SK-N-SH (cell line): ENCODE measurements at regions of chr11 and their contacts with region 1.

Region 1: GRCh38 chr11:131688051-131688698 is 317.8 kb downstream of the NTM start:
- DNase-seq: peak; percentile 96
- H3K4me3 ChIP-seq: peak overlapping the region; percentile 4 to 48; a peak in 2 of 4 replicates
- H3K27ac ChIP-seq: no peak overlapping the region
- H3K4me1 ChIP-seq: peaks cover 0 to 12% of the 10 kb centered on the region in 2 experiments; a peak in 2 of 4 replicates
- H3K27me3 ChIP-seq: peaks cover 5% of the 10 kb centered on the region; the same call in 1 of the 2 replicates
- CTCF ChIP-seq: peak; percentile 88
- EP300 ChIP-seq: no peak
- RAD21 ChIP-seq: peak; percentile 66

Region 2: DNA sequence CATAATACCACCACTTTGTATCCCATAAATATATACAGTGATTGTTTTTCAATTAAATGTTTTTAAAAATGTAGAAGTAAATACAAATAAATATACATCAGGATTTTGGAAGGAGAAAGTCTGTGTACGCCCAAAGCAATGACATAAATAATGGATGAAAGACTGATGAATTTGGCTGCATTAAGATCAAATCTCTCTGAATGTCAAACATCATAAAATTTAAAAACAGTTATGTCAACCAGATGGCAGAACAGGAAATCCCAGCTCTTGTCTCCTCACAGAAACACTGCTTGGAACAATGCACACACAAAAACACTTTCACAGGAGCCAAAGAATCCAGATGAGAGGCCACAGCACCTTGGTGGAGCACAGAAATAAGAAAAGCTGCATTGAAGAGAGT is 15.1 kb after region 1 on chr11:
- CTCF ChIA-PET with region 1: interaction called, 25 read pairs
- POLR2A ChIA-PET with region 1: no interaction called
- DNase-seq: peak; percentile 46
- H3K4me3 ChIP-seq: no peak overlapping the region
- H3K27ac ChIP-seq: peak overlapping the region in 1 of 2 experiments; percentile 81; a peak in 1 of 4 replicates
- H3K4me1 ChIP-seq: peaks cover 0 to 3% of the 10 kb centered on the region in 2 experiments; a peak in 2 of 4 replicates
- H3K27me3 ChIP-seq: no peaks in the 10 kb centered on the region
- CTCF ChIP-seq: no peak
- EP300 ChIP-seq: peak in 1 of 2 experiments; percentile 88; a peak in 2 of 4 replicates
- RAD21 ChIP-seq: no peak

Region 3: GRCh38 chr11:131785801-131786200 is 97.6 kb after region 1 on chr11:
- CTCF ChIA-PET with region 1: no interaction called
- POLR2A ChIA-PET with region 1: no interaction called
- DNase-seq: no peak
- H3K4me3 ChIP-seq: no peak overlapping the region
- H3K27ac ChIP-seq: no peak overlapping the region
- H3K4me1 ChIP-seq: no peaks in the 10 kb centered on the region
- H3K27me3 ChIP-seq: peaks cover 5% of the 10 kb centered on the region; the same call in 1 of the 2 replicates
- CTCF ChIP-seq: no peak
- EP300 ChIP-seq: no peak
- RAD21 ChIP-seq: no peak

Region 4: DNA sequence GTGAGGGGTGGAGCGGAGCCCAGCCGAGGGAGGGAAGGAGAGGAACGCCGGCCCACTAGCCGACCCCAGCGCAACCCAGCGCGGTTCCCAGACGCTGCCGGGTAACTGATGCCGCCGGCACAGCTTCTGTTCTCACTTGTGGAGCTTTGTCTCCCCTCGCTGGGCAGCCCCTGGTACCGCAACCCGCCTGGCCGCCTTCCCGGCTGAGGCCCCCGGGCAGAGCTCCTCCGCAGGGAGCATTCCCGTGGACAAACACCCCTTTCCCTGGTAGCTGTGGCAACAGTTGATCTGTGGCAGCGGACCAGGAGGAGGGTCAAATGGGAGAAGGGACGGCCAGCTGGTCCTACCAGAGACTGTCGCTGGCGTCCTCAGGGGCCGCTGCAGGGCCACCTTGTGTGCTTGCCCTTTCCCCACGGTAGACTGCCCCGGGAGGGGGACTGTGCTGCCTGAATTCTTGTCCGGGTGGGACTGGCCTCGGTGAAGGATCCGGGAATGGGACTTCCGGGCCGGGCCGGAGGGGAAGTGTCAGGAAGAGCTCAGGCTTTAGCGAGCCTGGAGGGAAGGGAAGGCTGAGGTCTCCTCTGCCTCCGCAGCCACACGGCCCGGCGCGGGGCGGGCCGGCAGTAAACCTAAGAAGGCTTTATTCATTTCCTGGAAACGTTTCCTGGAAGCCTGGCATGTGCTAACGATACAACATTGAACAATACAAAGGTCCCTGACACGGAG is 1376.1 kb after region 1 on chr11:
- CTCF ChIA-PET with region 1: interaction called, 10 read pairs
- POLR2A ChIA-PET with region 1: no interaction called
- DNase-seq: peak; percentile 91
- H3K4me3 ChIP-seq: peak overlapping the region; percentile 19 to 44; a peak in 2 of 4 replicates
- H3K27ac ChIP-seq: no peak overlapping the region
- H3K4me1 ChIP-seq: peaks cover 0 to 3% of the 10 kb centered on the region in 2 experiments; a peak in 1 of 4 replicates
- H3K27me3 ChIP-seq: no peaks in the 10 kb centered on the region
- CTCF ChIP-seq: peak; percentile 32
- EP300 ChIP-seq: no peak
- RAD21 ChIP-seq: peak; percentile 84